ENCODE measurements at regions of chr6 and their contacts with region 1.

Region 1: GRCh38 chr6:105898286-105898685 is 187.8 kb upstream of the PRDM1 start:
- DNase-seq: peak; percentile 78
- H3K4me3 ChIP-seq: no peak overlapping the region
- H3K27ac ChIP-seq: peak overlapping the region; percentile 53
- H3K27me3 ChIP-seq: no peaks in the 10 kb centered on the region
- CTCF ChIP-seq: no peak

Region 2: DNA sequence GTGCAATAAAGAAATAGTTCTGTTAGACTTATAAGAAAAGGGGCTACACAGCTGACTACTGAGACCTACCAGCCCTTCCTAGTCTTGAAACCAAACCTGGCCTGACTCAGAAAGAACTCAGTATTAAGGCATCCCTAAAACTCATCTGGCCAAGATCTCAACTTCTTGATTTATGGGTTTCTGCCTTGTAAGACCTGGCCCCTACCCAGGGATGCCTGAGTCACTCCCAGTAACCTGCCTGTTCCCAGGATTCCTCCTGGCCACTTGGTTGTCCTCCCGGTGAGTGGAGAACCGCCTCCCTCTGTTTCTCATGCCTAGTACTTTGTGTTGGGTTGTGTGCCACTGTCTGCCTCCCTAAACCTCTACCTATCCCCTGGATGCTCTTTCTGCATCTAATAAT is 306.0 kb before region 1 on chr6:
- CTCF ChIA-PET with region 1: no interaction called
- POLR2A ChIA-PET with region 1: interaction called, 10 read pairs
- DNase-seq: peak; percentile 63
- H3K4me3 ChIP-seq: no peak overlapping the region
- H3K27ac ChIP-seq: no peak overlapping the region
- H3K27me3 ChIP-seq: no peaks in the 10 kb centered on the region
- CTCF ChIP-seq: no peak

Region 3: GRCh38 chr6:106037060-106037459 is 138.8 kb after region 1 on chr6:
- CTCF ChIA-PET with region 1: no interaction called
- POLR2A ChIA-PET with region 1: no interaction called
- DNase-seq: no peak
- H3K4me3 ChIP-seq: no peak overlapping the region
- H3K27ac ChIP-seq: no peak overlapping the region
- H3K27me3 ChIP-seq: no peaks in the 10 kb centered on the region
- CTCF ChIP-seq: no peak